ENCODE measurements at regions of chr9 and their contacts with region 1.

Region 1: GRCh38 chr9:16335788-16336580 is 534.5 kb downstream of the BNC2 start:
- DNase-seq: peak; percentile 95 to 97
- ATAC-seq: peak; percentile 88 to 93
- H3K4me3 ChIP-seq: no peak overlapping the region
- H3K27ac ChIP-seq: peak overlapping the region; percentile 96
- H3K4me1 ChIP-seq: peaks cover 38% of the 10 kb centered on the region
- CTCF ChIP-seq: no peak
- EP300 ChIP-seq: peak; percentile 96 to 97
- POLR2A ChIP-seq: no peak
- RAD21 ChIP-seq: peak; percentile 46 to 80

Region 2: GRCh38 chr9:16180546-16180945 is 155.4 kb before region 1 on chr9:
- CTCF ChIA-PET with region 1: no interaction called
- POLR2A ChIA-PET with region 1: no interaction called
- DNase-seq: peak in 1 of 2 experiments; percentile 45
- ATAC-seq: peak in 1 of 2 experiments; percentile 67; a peak in 3 of 6 replicates
- H3K4me3 ChIP-seq: no peak overlapping the region
- H3K27ac ChIP-seq: no peak overlapping the region
- H3K4me1 ChIP-seq: no peaks in the 10 kb centered on the region
- CTCF ChIP-seq: no peak
- EP300 ChIP-seq: no peak
- POLR2A ChIP-seq: no peak
- RAD21 ChIP-seq: no peak

Region 3: GRCh38 chr9:16413509-16414016 is 77.6 kb after region 1 on chr9:
- CTCF ChIA-PET with region 1: interaction called, 4 read pairs
- POLR2A ChIA-PET with region 1: interaction called, 17 read pairs
- DNase-seq: peak; percentile 57 to 99
- ATAC-seq: peak; percentile 84 to 90
- H3K4me3 ChIP-seq: 0 out of 3 replicates have a peak overlapping the region, but pooled peaks have one; percentile 10
- H3K27ac ChIP-seq: peak overlapping the region; percentile 93 to 94
- H3K4me1 ChIP-seq: peaks cover 92% of the 10 kb centered on the region
- CTCF ChIP-seq: no peak
- EP300 ChIP-seq: peak; percentile 98
- POLR2A ChIP-seq: no peak
- RAD21 ChIP-seq: peak; percentile 41 to 80

Region 4: GRCh38 chr9:16475257-16475656 is 139.3 kb after region 1 on chr9:
- CTCF ChIA-PET with region 1: no interaction called
- POLR2A ChIA-PET with region 1: no interaction called
- DNase-seq: no peak
- ATAC-seq: no peak
- H3K4me3 ChIP-seq: no peak overlapping the region
- H3K27ac ChIP-seq: no peak overlapping the region
- H3K4me1 ChIP-seq: no peaks in the 10 kb centered on the region
- CTCF ChIP-seq: no peak
- EP300 ChIP-seq: no peak
- POLR2A ChIP-seq: no peak
- RAD21 ChIP-seq: no peak